ENCODE measurements at regions of chr3 and their contacts with region 1.

Region 1: DNA sequence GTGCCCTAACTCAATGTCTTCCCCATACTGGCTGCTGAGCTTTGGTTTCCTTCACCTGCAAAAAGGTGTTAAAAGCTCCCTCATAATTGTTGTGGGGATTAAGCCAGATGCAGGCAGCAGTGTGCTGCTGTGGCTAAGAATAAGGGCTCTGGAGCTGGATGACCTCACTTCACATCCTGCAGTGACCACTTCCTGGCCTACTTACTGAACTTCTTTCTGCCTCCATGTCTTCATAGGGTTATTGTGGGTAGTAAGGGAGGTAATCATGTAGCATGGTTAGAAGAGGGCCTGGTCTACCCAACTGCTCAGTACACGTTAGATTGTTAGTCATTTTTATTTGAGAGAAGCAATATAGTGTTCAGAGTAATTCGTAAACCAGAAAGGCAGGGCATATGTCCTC is 18.4 kb downstream of the GYG1 start:
- DNase-seq: peak; percentile 44 to 82
- ATAC-seq: peak; percentile 93 to 98 (median 96)
- H3K4me3 ChIP-seq: no peak overlapping the region
- H3K4me3 Mint-ChIP-seq: peak overlapping the region; percentile 78
- H3K27ac ChIP-seq: peak overlapping the region; percentile 83
- H3K27ac Mint-ChIP-seq: peak overlapping the region; percentile 87 to 90
- H3K4me1 ChIP-seq: peaks cover 28% of the 10 kb centered on the region
- H3K4me1 Mint-ChIP-seq: peaks cover 52 to 54% of the 10 kb centered on the region in 2 donors
- H3K27me3 ChIP-seq: no peaks in the 10 kb centered on the region
- H3K27me3 Mint-ChIP-seq: no peaks in the 10 kb centered on the region
- CTCF ChIP-seq: no peak

Region 2: GRCh38 chr3:148991194-148992026 is 18.3 kb before region 1 on chr3 and contains the start of gene GYG1:
- intact Hi-C with region 1: loop called (anchors 1 kb)
- DNase-seq: peak; percentile 78 to 93
- ATAC-seq: peak; percentile 83 to 91 (median 88)
- H3K4me3 ChIP-seq: peak within 1 kb of the TSS; percentile 82
- H3K4me3 Mint-ChIP-seq: peak within 1 kb of the TSS; percentile 86
- H3K27ac ChIP-seq: peak within 1 kb of the TSS; percentile 88
- H3K27ac Mint-ChIP-seq: peak within 1 kb of the TSS; percentile 70 to 91
- H3K4me1 ChIP-seq: peaks cover 25% of the 10 kb centered on the region
- H3K4me1 Mint-ChIP-seq: peaks cover 28 to 30% of the 10 kb centered on the region in 2 donors
- H3K27me3 ChIP-seq: no peaks in the 10 kb centered on the region
- H3K27me3 Mint-ChIP-seq: no peaks in the 10 kb centered on the region
- CTCF ChIP-seq: no peak
- total RNA-seq, gene GYG1: 46.6 to 56.5 (median 49.6) TPM

Region 3: GRCh38 chr3:149152420-149152819 is 142.7 kb after region 1 on chr3:
- intact Hi-C with region 1: no loop called
- DNase-seq: peak in 1 of 2 donors; percentile 37
- ATAC-seq: peak; percentile 76 to 95 (median 88)
- H3K4me3 ChIP-seq: no peak overlapping the region
- H3K4me3 Mint-ChIP-seq: no peak overlapping the region
- H3K27ac ChIP-seq: no peak overlapping the region
- H3K27ac Mint-ChIP-seq: peak overlapping the region; percentile 31 to 63
- H3K4me1 ChIP-seq: peaks cover 16% of the 10 kb centered on the region
- H3K4me1 Mint-ChIP-seq: peaks cover 18 to 20% of the 10 kb centered on the region in 2 donors
- H3K27me3 ChIP-seq: no peaks in the 10 kb centered on the region
- H3K27me3 Mint-ChIP-seq: no peaks in the 10 kb centered on the region
- CTCF ChIP-seq: no peak

Measured in natural killer cell (primary cell).